Calu3 (cell line): ENCODE measurements at regions of chr19 and their contacts with region 1.

Region 1: DNA sequence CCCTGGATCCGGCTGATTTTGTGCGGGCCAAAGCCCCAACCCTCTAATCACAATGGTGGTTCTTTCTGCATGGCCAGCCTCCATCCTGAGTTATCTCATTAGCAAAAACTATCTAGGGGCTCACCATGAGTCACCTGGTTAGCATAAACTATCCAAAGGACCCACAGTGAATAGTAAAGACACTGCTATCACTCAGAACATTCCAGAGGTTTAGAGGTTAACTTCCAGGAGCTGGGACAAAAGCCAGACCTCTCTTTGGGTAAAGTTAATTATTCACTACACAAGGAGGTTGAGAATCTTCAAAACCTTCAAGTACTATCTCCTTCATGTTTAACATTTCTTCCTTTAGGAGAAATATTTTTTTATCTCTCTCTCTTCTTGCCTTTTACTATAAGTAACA is 18.8 kb upstream of the PPP5C start:
- DNase-seq: no peak
- H3K4me3 Mint-ChIP-seq: no peak overlapping the region
- H3K27ac Mint-ChIP-seq: no peak overlapping the region
- H3K4me1 Mint-ChIP-seq: no peaks in the 10 kb centered on the region
- H3K27me3 Mint-ChIP-seq: peaks cover 17% of the 10 kb centered on the region
- CTCF ChIP-seq: no peak

Region 2: DNA sequence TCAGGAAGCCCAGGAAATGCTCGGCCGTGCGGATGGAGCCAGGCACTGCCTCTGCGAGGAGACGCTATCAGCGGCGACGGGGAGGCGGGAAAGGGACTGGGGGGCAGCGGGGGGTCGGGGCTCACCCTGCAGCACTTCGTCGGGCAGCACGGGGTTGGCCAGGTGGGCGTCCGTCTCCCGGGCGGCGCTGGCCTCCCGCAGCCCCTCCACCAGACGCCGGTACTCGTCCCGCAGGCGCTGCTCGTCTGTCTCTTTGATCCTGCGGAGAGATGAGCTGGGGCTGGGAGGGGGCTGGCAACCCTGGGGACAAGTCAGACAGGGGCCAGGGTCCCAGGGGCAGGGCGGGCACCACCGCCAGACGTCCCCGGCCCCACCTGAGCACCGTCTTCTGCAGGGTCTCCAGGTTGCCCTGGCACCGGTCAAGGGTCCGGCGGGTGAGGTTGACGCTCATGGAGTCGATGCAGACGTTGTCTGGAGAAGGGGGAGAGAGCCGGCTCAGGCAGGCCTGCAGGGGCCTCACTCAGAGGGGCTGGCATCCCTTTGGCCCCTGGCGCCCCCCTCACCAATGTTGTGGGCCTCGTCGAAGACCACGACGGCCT is 964.1 kb before region 1 on chr19:
- CTCF ChIA-PET with region 1: interaction called, 12 read pairs
- intact Hi-C with region 1: no loop called
- DNase-seq: no peak
- H3K4me3 Mint-ChIP-seq: no peak overlapping the region
- H3K27ac Mint-ChIP-seq: no peak overlapping the region
- H3K4me1 Mint-ChIP-seq: peaks cover 4% of the 10 kb centered on the region
- H3K27me3 Mint-ChIP-seq: no peaks in the 10 kb centered on the region
- CTCF ChIP-seq: no peak

Region 3: GRCh38 chr19:46413262-46414031 is 85.4 kb after region 1 on chr19 and contains the start of gene CCDC8:
- CTCF ChIA-PET with region 1: no interaction called
- intact Hi-C with region 1: no loop called
- DNase-seq: no peak
- H3K4me3 Mint-ChIP-seq: no peak within 1 kb of the TSS
- H3K27ac Mint-ChIP-seq: no peak within 1 kb of the TSS
- H3K4me1 Mint-ChIP-seq: peaks cover 10% of the 10 kb centered on the region
- H3K27me3 Mint-ChIP-seq: peaks cover 79% of the 10 kb centered on the region
- CTCF ChIP-seq: no peak
- total RNA-seq, gene CCDC8: not detected in 2 replicates

Region 4: DNA sequence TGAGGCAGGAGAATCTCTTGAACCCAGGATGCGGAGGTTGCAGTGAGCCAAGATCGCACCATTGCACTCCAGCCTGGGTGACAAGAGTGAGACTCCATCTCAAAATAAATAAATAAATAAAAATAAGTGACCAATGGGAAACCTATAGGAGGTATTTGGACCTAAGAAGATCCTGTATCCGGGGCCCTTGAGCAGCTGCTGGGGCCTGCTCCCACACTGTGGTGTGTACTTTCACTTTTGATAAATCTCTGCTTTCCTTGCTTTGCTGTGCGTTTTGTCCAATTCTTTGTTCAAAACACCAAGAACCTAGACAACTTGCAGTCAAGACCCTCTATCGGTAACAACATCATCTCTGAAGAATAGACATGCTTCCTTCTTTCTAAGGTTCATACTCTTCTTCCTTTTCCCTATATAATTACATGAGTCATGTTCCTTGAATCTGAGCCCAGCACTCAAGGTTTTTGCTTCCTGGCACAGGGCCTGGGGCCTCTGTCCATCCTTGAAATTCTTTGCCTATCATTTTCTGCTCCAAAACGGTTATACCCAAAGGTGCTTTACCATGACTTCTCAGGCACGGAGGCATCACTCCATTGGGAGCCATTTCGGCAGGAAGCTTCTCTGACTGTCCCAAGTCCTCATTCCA is 114.8 kb after region 1 on chr19:
- CTCF ChIA-PET with region 1: no interaction called
- intact Hi-C with region 1: no loop called
- DNase-seq: peak; percentile 35
- H3K4me3 Mint-ChIP-seq: no peak overlapping the region
- H3K27ac Mint-ChIP-seq: no peak overlapping the region
- H3K4me1 Mint-ChIP-seq: peaks cover 10% of the 10 kb centered on the region
- H3K27me3 Mint-ChIP-seq: peaks cover 18% of the 10 kb centered on the region
- CTCF ChIP-seq: no peak